Activated naive CD4-positive, alpha-beta T cell treated with anti-CD3 and anti-CD28 coated beads for 36 hours (primary cell): ENCODE measurements at regions of chr17 and their contacts with region 1.

Region 1: GRCh38 chr17:67475236-67475937 is 98.3 kb downstream of the PITPNC1 start:
- DNase-seq: peak; percentile 95
- H3K4me3 Mint-ChIP-seq: peak overlapping the region; percentile 60
- H3K27ac Mint-ChIP-seq: peak overlapping the region; percentile 99
- H3K4me1 Mint-ChIP-seq: peaks cover 60% of the 10 kb centered on the region
- H3K27me3 Mint-ChIP-seq: no peaks in the 10 kb centered on the region

Region 2: GRCh38 chr17:67411397-67411796 is 64.0 kb before region 1 on chr17:
- CTCF ChIA-PET with region 1: no interaction called
- intact Hi-C with region 1: no loop called
- DNase-seq: no peak
- H3K4me3 Mint-ChIP-seq: no peak overlapping the region
- H3K27ac Mint-ChIP-seq: no peak overlapping the region
- H3K4me1 Mint-ChIP-seq: peaks cover 57% of the 10 kb centered on the region
- H3K27me3 Mint-ChIP-seq: no peaks in the 10 kb centered on the region

Region 3: DNA sequence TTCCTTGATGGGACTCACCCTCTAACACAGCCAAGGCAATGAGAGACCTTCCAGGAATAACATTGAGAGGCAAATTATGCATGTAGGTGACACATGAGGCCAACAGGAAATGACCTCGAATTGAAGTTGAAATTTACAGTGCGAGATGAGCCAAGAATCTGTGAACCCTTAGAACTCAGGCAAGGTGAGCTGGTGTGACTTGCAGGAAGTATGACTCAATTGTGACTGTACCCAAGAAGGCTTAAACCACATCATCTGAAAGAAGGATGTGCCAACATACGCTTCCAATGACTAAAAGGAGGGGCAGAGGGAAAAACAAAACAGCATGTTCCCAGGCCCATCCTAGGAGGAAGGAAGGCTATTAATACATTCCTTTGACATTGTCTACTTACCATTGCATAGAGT is 53.5 kb before region 1 on chr17:
- CTCF ChIA-PET with region 1: interaction called, 9 read pairs
- intact Hi-C with region 1: loop called (anchors 1 kb)
- DNase-seq: peak; percentile 78
- H3K4me3 Mint-ChIP-seq: no peak overlapping the region
- H3K27ac Mint-ChIP-seq: peak overlapping the region; percentile 97
- H3K4me1 Mint-ChIP-seq: peaks cover 91% of the 10 kb centered on the region
- H3K27me3 Mint-ChIP-seq: no peaks in the 10 kb centered on the region

Region 4: DNA sequence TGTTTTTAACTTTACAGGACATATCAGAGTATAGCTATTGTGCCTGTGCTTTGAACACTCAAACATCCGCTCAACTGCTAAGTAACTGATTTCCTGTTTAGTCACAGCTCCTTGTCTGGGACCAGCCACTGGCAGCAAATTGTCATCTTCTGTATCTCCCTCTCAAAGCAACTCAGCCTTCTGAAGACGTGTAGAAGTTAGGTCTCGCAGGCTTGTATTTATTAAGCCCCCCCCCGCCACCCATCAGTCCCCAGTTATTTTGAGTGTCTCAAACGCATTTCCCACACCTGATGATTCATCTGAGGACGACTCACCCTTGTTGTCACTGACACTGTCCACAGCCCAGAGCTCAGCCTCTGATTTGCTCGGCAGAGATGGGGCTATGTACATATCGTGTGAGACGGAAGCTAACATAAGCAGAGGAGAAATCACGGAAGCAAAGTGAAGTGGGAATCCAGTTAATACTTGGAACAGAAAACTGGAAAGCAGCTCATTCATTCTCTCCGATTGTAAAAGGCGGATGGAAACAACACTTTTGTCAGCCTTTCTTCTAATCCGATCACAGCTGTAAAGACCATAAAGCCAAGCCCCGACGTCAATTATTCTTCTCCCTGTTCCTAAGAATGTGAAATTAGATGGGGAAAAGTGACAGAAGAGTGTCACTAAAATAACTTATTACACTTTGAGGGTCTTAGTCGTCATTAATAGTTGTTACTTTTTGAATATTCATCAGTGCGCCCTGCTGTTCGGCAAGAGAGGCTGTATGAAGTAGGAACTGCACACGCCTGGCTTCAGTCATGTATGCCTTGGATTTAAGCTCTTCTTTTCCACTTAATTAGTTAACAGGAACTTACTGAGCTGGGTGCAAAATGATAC is 34.1 kb before region 1 on chr17:
- CTCF ChIA-PET with region 1: interaction called, 59 read pairs
- intact Hi-C with region 1: loop called (anchors 1 kb)
- DNase-seq: peak; percentile 90
- H3K4me3 Mint-ChIP-seq: peak overlapping the region; percentile 75
- H3K27ac Mint-ChIP-seq: peak overlapping the region; percentile 96
- H3K4me1 Mint-ChIP-seq: peaks cover 76% of the 10 kb centered on the region
- H3K27me3 Mint-ChIP-seq: no peaks in the 10 kb centered on the region

Region 5: DNA sequence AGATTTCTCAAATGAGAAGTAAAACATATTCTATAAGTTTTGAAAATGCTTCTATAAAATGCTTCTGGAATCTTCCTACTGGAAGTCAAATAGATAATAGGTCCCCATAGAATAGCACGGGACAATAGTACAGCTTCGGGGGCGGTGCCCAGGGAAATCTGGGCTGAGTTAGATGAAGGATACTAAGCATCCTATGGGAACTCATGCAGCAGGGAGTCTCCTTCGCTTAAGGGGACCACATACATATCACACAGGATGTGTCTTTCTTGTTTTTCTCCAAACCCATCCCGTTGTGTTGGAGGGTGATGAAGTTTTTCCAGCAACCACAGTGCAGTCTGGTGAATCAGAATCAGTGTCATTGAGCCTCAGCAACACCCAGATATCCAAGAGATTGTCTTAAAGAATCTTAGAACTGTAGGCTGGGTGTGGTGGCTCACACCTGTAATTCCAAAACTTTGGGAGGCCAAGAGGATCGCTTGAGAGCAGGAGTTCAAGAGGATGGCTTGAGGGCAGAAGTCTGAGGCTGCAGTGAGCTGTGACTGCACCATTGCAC is 14.1 kb before region 1 on chr17:
- CTCF ChIA-PET with region 1: interaction called, 20 read pairs
- intact Hi-C with region 1: no loop called
- DNase-seq: peak; percentile 67
- H3K4me3 Mint-ChIP-seq: no peak overlapping the region
- H3K27ac Mint-ChIP-seq: peak overlapping the region; percentile 87
- H3K4me1 Mint-ChIP-seq: peaks cover 75% of the 10 kb centered on the region
- H3K27me3 Mint-ChIP-seq: no peaks in the 10 kb centered on the region

Region 6: GRCh38 chr17:67509390-67510289 is 34.3 kb after region 1 on chr17:
- CTCF ChIA-PET with region 1: no interaction called
- intact Hi-C with region 1: no loop called
- DNase-seq: no peak
- H3K4me3 Mint-ChIP-seq: no peak overlapping the region
- H3K27ac Mint-ChIP-seq: no peak overlapping the region
- H3K4me1 Mint-ChIP-seq: peaks cover 34% of the 10 kb centered on the region
- H3K27me3 Mint-ChIP-seq: no peaks in the 10 kb centered on the region

Region 7: DNA sequence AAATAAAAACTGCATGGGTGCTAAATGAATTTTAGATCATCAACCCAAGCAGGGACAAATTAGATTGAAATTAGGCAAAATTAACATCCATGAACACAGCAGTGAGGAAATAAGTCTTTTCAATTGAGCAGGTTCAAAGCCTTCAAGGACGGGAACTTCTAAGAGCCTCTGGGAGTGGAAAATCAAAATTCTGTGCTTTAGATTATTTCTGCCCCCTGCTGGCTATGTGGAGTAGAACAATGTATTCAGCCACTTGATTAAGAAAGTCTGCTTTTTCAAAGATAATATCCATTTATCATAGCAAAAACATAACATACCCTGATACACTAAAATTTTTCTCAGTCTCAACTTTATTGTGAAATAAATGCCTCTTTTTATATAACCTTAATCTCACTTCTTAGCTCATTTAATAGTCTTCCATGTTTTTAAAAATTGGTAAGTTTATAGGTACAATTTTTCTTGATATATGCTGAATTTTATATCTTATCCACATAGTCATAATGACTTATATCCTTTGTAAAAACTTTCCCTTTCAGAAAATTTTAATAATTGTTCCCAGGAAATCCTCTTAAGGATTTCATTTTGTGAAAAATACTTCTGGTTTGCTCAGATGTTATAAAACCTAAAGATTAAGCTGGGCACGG is 214.3 kb after region 1 on chr17:
- CTCF ChIA-PET with region 1: no interaction called
- intact Hi-C with region 1: loop called (anchors 1 kb)
- DNase-seq: peak; percentile 71
- H3K4me3 Mint-ChIP-seq: no peak overlapping the region
- H3K27ac Mint-ChIP-seq: no peak overlapping the region
- H3K4me1 Mint-ChIP-seq: peaks cover 4% of the 10 kb centered on the region
- H3K27me3 Mint-ChIP-seq: no peaks in the 10 kb centered on the region